ENCODE measurements at regions of chr15 and their contacts with region 1.

Region 1: DNA sequence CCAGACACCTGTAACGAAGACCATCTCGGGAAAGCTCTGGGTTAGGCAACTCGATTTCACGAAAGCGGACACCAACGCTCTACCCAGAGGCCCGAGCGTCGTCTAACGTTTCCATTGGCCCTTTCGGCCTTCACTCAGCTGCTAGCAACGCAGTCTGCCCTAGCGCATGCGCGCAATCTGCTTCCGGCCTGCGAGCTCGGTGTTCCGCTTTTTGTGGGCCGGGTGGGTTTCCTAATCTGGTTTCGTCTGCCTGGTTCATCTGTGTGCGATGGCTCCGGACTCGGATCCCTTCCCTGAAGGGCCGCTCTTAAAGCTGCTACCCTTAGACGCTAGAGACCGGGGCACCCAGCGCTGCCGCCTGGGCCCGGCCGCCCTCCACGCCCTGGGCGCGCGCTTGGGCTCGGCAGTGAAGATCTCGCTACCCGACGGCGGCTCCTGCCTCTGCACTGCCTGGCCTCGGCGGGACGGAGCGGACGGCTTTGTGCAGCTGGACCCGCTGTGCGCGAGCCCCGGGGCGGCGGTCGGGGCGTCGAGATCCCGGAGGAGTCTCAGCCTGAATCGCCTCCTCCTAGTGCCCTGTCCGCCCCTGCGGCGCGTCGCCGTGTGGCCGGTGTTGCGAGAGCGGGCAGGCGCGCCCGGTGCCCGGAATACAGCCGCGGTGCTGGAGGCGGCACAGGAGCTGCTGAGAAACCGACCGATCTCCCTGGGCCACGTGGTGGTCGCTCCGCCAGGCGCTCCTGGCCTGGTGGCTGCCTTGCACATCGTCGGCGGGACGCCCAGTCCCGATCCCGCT is 24.0 kb upstream of the GATM start:
- DNase-seq: peak; percentile 95 to 99
- H3K4me3 ChIP-seq: peak overlapping the region; percentile 64 to 98 (median 97)
- H3K27ac ChIP-seq: peak overlapping the region; percentile 87 to 96 (median 94)
- H3K4me1 ChIP-seq: peaks cover 12 to 51% (median 33%) of the 10 kb centered on the region in 4 donors
- H3K27me3 ChIP-seq: no peaks in the 10 kb centered on the region
- CTCF ChIP-seq: no peak
- EP300 ChIP-seq: no peak
- POLR2A ChIP-seq: peak in 1 of 4 donors; percentile 32

Region 2: GRCh38 chr15:45200001-45200798 is 202.2 kb before region 1 on chr15:
- intact Hi-C with region 1: loop called (anchors 10 kb)
- DNase-seq: peak; percentile 97 to 98
- H3K4me3 ChIP-seq: peak overlapping the region; percentile 55 to 65 (median 58)
- H3K27ac ChIP-seq: peak overlapping the region; percentile 92 to 99 (median 97)
- H3K4me1 ChIP-seq: peaks cover 0 to 26% (median 14%) of the 10 kb centered on the region in 4 donors
- H3K27me3 ChIP-seq: no peaks in the 10 kb centered on the region
- CTCF ChIP-seq: peak in 1 of 7 experiments; percentile 4
- EP300 ChIP-seq: no peak
- POLR2A ChIP-seq: peak in 2 of 4 donors; percentile 62 to 83

Region 3: GRCh38 chr15:45307230-45307924 is 95.0 kb before region 1 on chr15:
- intact Hi-C with region 1: loop called (anchors 10 kb)
- DNase-seq: peak in 1 of 2 donors; percentile 82
- H3K4me3 ChIP-seq: peak overlapping the region in 1 of 4 donors; percentile 22
- H3K27ac ChIP-seq: peak overlapping the region in 2 of 5 donors; percentile 46 to 63
- H3K4me1 ChIP-seq: peaks cover 0 to 13% (median 11%) of the 10 kb centered on the region in 4 donors
- H3K27me3 ChIP-seq: no peaks in the 10 kb centered on the region
- CTCF ChIP-seq: peak in 5 of 7 experiments; percentile 55 to 82 (median 60)
- EP300 ChIP-seq: no peak
- POLR2A ChIP-seq: no peak

Measured in stomach (tissue), 19 donors.